Activated naive CD4-positive, alpha-beta T cell treated with anti-CD3 and anti-CD28 coated beads for 36 hours (primary cell): ENCODE measurements at regions of chr4 and their contacts with region 1.

Region 1: DNA sequence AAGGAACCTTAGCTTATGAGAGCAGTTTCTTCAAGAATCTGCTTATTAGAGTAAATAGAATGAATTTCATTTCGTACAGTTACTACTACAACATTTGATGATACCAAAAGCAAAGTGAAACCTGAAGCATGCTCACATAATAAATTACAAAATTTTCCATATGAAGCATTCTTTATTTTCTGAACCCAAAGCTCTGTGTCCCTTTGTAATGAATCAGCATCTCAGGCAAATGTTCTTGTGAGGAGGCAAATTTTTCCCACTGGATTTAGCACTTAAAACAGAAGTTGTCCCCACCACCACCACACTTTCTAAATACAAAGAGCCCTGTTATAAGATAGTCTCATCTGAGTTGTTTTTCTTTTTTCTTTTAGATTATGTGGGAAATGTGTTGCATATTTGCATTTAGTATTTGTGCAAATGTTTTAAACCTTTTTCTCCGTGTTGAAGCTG is 70.7 kb upstream of the NFKB1 start:
- DNase-seq: no peak
- H3K4me3 Mint-ChIP-seq: peak overlapping the region; percentile 82
- H3K27ac Mint-ChIP-seq: peak overlapping the region; percentile 81
- H3K4me1 Mint-ChIP-seq: peaks cover 8% of the 10 kb centered on the region
- H3K27me3 Mint-ChIP-seq: peaks cover 5% of the 10 kb centered on the region

Region 2: GRCh38 chr4:101288365-101289145 is 1141.9 kb before region 1 on chr4:
- CTCF ChIA-PET with region 1: no interaction called
- intact Hi-C with region 1: no loop called
- DNase-seq: no peak
- H3K4me3 Mint-ChIP-seq: no peak overlapping the region
- H3K27ac Mint-ChIP-seq: no peak overlapping the region
- H3K4me1 Mint-ChIP-seq: peaks cover 19% of the 10 kb centered on the region
- H3K27me3 Mint-ChIP-seq: no peaks in the 10 kb centered on the region

Region 3: GRCh38 chr4:102007959-102008425 is 422.5 kb before region 1 on chr4:
- CTCF ChIA-PET with region 1: no interaction called
- intact Hi-C with region 1: loop called (anchors 5 kb)
- DNase-seq: peak; percentile 26
- H3K4me3 Mint-ChIP-seq: no peak overlapping the region
- H3K27ac Mint-ChIP-seq: no peak overlapping the region
- H3K4me1 Mint-ChIP-seq: peaks cover 7% of the 10 kb centered on the region
- H3K27me3 Mint-ChIP-seq: no peaks in the 10 kb centered on the region

Region 4: DNA sequence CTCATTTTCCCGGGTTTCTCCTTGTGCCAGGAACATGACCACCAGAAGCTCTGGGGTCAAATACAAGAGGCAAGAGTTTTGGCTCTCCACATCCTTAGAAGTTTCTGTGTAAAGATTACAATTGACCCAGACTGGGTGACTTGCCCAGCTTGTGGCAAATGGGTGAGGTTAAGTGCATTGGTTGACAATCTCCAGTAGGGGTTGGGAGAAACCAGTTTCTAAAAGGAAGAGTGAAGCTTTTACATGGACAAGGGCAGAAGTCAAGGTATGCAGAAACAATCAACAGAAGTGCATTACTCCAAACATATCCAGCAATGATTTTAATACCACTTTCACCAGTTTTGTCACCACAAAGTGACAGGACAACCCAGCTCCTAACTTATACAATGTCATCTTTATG is 175.0 kb before region 1 on chr4:
- CTCF ChIA-PET with region 1: interaction called, 6 read pairs
- intact Hi-C with region 1: loop called (anchors 1 kb)
- DNase-seq: no peak
- H3K4me3 Mint-ChIP-seq: no peak overlapping the region
- H3K27ac Mint-ChIP-seq: no peak overlapping the region
- H3K4me1 Mint-ChIP-seq: no peaks in the 10 kb centered on the region
- H3K27me3 Mint-ChIP-seq: no peaks in the 10 kb centered on the region